ENCODE measurements at regions of chr2 and their contacts with region 1.

Region 1: GRCh38 chr2:205860181-205860580 is 177.9 kb downstream of the NRP2 start:
- DNase-seq: no peak
- ATAC-seq: no peak
- H3K4me3 ChIP-seq: no peak overlapping the region
- H3K27ac ChIP-seq: no peak overlapping the region
- H3K4me1 ChIP-seq: peaks cover 0 to 13% (median 4%) of the 10 kb centered on the region in 9 donors
- H3K27me3 ChIP-seq: peaks cover 0 to 4% (median 0%) of the 10 kb centered on the region in 7 donors
- CTCF ChIP-seq: no peak

Region 2: DNA sequence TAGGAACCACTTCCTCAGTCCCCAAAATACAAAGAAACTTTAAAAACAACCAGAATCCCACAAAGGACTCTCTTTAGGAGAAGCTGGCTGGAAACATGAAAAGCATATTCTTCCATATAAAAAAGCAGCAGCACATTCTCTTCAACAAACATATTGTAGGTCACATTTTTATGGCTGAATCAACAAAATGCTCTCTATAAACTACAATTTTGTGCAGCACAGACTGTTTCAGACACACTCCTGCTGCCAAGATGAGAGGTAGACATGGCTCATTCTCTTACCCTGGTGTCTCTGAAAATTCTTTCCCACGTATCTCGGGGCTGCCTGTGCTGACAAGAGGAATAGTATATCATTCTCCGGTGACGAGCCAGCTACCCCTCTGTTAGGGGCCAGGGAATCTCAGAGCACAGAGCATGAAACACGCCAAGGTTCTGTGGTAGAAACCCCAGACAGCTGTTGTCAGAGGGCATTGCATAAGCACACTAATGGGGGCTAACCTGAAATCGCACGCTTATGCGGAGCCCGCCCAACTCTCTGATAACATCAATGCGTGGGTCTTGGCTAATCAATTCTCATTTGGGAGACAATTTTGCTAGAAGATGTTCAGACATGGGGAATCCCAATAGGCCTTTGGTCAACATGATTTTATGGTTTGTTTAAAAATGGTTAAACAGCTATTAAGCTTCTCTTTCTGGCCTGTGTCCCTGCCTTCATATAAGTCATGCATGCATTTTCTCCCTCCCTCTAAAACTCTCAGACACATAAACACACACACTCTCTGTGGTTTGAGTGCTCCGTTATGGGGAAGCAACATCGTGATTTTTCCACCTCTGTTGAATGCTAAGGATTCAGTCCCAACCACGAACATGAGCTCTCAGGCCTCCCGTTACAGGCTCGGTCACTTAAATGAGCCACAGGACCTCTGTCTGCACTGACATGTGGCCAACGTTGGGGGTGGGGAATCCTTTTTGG is 48.3 kb after region 1 on chr2:
- intact Hi-C with region 1: loop called in 1 of 10 experiments (anchors 2 kb)
- DNase-seq: no peak
- ATAC-seq: no peak
- H3K4me3 ChIP-seq: no peak overlapping the region
- H3K27ac ChIP-seq: no peak overlapping the region
- H3K4me1 ChIP-seq: no peaks in the 10 kb centered on the region
- H3K27me3 ChIP-seq: peaks cover 0 to 17% (median 0%) of the 10 kb centered on the region in 7 donors
- CTCF ChIP-seq: no peak

Measured in heart right ventricle (tissue), 16 donors.